Astrocyte of the cerebellum (primary cell): ENCODE measurements at regions of chr1 and their contacts with region 1.

Region 1: DNA sequence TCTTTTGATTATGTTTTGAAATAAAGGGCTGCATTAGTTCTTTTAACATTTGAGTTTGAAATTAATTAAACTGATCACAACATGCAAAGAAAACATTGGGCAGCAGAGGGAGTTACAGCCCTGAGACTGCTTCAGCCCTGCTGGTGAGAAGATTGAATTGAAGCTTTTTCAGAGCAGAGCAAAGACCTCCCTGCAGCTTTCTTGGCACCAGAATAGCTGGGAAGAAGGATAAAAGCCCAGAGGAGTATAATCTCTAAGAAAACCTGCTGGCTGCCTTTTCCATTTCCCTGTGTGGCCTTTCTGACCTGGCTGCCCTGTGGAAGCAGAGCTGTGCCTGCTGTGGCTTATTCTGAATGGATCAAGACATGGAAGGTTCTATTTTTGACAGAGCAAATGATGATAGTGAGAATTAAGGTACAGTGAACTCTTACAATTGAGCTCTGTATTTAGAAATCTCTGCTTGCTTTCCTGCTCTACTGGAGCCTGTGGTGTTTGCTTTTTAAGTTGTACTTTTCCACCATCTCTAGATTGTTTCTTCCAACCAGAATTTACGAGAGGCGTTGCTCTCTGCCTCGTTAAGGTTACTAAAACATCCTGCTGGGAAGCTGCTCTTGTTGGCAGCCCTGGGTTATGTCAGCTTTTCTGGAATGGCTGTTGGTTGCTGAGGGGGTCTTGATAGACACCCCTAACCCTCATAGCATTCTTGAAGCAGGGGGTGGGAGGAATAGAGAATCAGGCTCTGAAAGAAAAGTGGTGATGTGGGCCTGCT is 9.9 kb downstream of the SNRPE start:
- DNase-seq: peak; percentile 80
- H3K4me3 ChIP-seq: no peak overlapping the region
- CTCF ChIP-seq: peak; percentile 91

Region 2: DNA sequence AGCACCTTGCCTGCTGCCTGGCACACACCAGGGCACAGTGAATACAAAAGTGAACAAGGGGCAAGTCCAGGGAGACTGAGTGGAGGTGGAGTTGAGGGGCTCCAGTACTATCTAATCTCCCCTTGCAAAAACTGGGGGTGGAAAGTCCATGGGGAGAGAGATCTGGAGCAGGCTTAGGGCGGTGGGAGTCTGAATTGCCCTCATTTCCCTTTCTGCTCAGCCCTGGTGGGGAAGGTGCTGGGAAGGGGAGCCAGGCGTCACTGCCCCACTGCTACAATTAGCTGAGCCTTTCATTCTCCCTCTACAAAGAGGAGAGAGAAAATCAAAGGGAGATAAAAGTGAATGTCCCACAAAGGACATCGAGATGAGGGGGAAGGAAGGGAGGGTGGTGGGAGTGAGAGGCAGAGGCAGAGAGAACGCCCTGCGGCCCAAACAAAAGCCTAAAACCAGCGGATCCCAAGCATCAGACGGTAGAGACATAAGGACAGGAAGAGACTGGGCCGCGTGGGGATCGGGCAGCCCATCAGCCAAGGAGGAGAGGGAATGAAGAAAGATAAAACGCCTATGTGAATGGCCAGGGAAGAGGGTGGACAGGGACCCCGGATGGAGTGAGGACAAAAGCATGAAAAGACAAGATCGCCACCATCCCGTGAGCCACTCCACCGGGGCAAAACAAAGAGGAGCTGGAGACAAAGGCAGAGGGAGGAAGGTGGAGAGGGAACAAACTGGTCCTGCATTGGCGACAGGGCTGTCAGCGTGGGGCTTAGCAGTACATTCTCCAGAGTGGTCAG is 154.8 kb after region 1 on chr1:
- in situ Hi-C with region 1: loop called (anchors 10 kb)
- DNase-seq: no peak
- H3K4me3 ChIP-seq: no peak overlapping the region
- CTCF ChIP-seq: no peak

Region 3: GRCh38 chr1:204136814-204137213 is 265.5 kb after region 1 on chr1:
- in situ Hi-C with region 1: loop called (anchors 5 kb)
- DNase-seq: no peak
- H3K4me3 ChIP-seq: no peak overlapping the region
- CTCF ChIP-seq: no peak

Region 4: DNA sequence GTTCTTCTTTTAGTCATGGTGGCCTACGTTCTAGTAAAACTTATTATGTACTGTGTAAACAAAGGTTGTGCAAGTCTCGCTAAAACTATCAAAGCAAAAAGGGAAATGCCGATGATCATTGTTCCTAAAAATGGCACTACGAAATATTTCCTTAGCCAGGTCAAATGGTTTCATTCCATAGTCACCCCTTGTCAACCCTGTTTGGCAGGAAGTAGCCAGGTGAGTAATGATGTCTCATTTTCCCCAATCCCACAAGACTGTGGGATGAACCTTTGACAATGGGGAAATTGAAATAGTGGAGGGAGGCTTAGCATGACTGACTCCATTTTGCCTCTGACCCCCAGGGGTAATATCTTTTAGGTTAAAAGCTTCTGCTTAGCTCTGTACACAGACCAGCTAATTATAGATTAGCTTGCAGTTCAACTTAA is 300.5 kb after region 1 on chr1:
- in situ Hi-C with region 1: no loop called
- DNase-seq: no peak
- H3K4me3 ChIP-seq: no peak overlapping the region
- CTCF ChIP-seq: no peak

Region 5: GRCh38 chr1:204363335-204364124 is 492.2 kb after region 1 on chr1:
- in situ Hi-C with region 1: loop called (anchors 5 kb)
- DNase-seq: peak; percentile 35
- H3K4me3 ChIP-seq: peak overlapping the region; percentile 41
- CTCF ChIP-seq: peak; percentile 85